GM23248 (cell line): ENCODE measurements at regions of chr22 and their contacts with region 1.

Region 1: DNA sequence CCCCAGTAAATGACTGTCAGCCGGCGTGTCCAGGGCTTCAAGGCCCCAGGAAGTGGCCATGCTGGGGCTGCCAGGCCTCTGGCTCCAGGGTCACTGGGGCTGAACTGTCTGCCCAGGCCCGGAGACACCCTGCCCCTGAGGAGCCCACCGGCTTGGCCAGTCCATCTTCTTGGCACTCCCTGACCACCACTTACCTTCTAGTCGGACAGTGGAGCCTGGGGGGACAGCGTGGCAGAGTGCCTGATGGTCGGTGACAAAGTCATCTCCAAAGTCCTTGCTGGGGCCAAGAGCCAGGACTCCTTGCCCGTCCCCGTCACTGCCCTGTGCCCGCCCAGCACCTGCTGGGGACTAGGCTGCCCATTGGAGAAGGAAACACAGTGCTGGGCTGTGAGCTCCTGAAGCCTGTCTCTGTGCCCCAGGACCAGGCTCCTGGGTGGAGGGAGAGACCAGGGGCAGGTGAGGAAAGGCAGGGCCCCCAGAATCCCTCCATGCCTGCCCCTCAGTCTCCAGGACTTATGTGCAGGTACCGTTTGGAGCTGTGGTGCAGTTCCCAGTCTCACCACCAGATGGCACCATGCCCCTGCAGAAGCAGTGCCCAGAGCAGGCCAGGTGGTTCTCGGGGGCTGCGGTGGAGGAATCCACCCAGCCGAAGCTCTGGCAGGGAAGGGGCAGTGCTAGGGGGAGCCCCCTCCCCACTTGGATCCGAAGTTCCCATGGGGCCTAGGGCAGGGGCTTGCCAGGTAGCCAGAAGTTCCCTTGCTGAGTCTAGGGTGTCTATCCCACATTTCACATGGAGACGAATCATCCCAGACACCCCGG is 6.0 kb upstream of the CCDC188 start:
- DNase-seq: peak; percentile 53
- H3K4me3 ChIP-seq: no peak overlapping the region
- H3K27ac ChIP-seq: no peak overlapping the region
- H3K4me1 ChIP-seq: no peaks in the 10 kb centered on the region
- H3K27me3 ChIP-seq: no peaks in the 10 kb centered on the region; the same call in 1 of the 2 replicates

Region 2: DNA sequence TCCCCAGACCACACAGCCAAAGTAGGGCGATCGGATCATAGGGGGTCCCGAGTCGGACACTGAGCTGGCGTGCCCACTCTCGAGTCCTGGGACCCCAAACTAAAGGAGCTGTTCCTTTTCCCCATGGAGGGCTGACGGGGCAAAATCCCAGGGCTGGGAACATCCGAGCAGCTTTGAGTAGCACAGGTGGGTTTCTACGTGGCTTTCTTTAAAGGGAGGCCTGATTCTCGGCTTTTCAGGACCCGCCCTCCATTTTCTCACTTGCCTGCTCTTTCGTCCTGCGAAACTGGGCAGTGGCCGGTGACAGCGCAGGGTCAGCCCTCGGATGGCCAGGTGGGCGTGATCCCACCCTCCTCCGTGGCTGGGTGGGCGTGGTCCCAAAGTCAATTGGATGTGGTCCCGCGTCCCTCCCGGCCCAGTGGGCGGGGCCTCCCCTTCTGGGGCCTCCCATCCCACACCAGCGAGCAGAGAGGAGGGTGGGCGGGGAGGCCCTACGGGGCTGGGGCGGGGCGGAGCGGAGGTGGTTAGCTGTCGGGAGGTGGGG is 197.7 kb before region 1 on chr22:
- in situ Hi-C with region 1: no loop called
- DNase-seq: peak; percentile 77
- H3K4me3 ChIP-seq: peak overlapping the region; percentile 47
- H3K27ac ChIP-seq: 0 out of 2 replicates have a peak overlapping the region, but pooled peaks have one; percentile 53
- H3K4me1 ChIP-seq: peaks cover 25% of the 10 kb centered on the region
- H3K27me3 ChIP-seq: no peaks in the 10 kb centered on the region

Region 3: GRCh38 chr22:20205964-20206708 is 49.3 kb after region 1 on chr22:
- in situ Hi-C with region 1: no loop called
- DNase-seq: peak; percentile 82
- H3K4me3 ChIP-seq: peak overlapping the region; percentile 95
- H3K27ac ChIP-seq: peak overlapping the region; percentile 47
- H3K4me1 ChIP-seq: peaks cover 32% of the 10 kb centered on the region
- H3K27me3 ChIP-seq: no peaks in the 10 kb centered on the region

Region 4: GRCh38 chr22:20279662-20280134 is 122.9 kb after region 1 on chr22:
- in situ Hi-C with region 1: loop called (anchors 5 kb)
- DNase-seq: peak; percentile 33
- H3K4me3 ChIP-seq: no peak overlapping the region
- H3K27ac ChIP-seq: no peak overlapping the region
- H3K4me1 ChIP-seq: no peaks in the 10 kb centered on the region
- H3K27me3 ChIP-seq: no peaks in the 10 kb centered on the region

Region 5: DNA sequence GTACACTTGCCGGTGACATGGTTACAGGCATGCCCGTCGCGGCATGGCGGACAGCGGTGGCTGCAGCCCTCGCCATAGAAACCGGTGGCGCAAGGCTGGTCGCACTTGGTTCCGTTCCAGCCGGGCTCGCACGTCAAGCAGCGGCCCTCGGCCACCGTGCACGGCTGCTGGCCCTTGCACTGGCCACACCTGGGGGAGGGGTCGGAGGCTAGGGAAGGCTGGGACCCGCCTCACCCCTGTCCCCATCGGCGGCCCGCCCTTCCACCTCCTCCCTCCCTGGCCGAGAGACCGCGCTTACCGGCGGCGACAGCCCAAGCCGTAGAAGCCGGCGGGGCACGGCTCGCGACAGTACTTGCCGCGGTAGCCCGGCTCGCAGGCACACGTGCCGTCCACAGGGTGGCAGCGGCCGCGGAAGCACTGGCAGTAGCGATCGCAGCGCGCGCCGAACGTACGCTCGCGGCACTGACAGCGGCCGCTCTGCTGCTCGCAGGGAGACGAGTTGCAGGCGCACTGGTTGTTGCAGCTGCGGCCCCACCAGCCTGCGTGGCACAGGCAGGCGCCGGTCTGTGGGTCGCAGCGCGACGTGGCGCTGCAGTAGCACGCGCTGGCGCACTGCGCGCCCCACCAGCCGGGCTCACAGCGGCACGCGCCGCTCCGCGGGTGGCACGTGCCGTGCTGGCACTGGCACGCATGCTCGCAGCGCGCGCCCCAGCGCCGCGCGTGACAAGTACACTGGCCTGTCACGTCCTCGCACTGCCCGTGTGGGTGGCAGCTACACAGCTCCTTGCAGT is 274.1 kb after region 1 on chr22:
- in situ Hi-C with region 1: no loop called
- DNase-seq: peak; percentile 75
- H3K4me3 ChIP-seq: no peak overlapping the region; the same call in 1 of the 2 replicates
- H3K27ac ChIP-seq: no peak overlapping the region
- H3K4me1 ChIP-seq: peaks cover 10% of the 10 kb centered on the region
- H3K27me3 ChIP-seq: no peaks in the 10 kb centered on the region